Posterior cingulate gyrus (tissue), 11 donors: ENCODE measurements at regions of chr2 and their contacts with region 1.

Region 1: DNA sequence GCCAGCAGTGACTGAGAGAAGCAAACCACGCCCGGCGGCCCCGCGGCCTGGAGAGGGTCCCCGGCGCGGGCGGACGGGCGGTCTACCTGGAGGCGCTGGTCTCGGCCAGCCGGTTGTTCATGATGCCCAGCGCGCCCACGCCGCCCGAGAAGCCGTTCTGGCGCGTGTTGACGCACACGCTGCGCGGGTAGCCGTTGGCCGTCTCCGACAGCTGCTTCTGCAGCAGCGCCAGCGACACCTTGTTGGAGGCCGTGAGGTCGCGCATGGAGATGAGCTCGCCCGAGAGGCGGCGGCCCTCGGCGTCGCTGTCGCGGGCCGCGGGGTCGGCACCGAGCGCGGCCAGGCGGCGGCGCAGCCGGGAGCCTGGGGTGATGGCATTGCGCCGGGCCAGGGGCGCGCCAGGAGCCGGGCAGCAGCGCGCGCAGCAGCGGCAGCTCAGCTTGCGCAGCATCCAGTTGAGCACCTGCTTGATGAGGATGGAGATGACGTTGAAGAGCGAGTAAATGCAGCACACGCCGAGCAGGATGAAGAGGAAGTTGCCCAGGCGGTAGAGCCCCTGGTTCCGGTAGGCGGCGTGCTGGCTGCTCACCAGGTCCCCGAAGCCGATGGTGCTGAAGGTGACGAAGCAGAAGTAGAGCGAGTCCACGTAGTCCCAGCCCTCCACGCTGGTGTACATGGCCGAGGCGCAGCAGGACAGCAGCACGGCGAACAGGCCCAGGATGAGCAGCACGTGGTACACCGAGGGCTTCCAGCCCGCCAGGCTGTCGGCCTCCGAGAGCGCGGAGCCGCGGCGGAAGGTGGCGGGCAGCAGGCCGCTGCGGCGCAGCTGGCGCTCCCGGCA is 118.1 kb downstream of the MSH2 start:
- DNase-seq: peak; percentile 60 to 95 (median 72)

Region 2: DNA sequence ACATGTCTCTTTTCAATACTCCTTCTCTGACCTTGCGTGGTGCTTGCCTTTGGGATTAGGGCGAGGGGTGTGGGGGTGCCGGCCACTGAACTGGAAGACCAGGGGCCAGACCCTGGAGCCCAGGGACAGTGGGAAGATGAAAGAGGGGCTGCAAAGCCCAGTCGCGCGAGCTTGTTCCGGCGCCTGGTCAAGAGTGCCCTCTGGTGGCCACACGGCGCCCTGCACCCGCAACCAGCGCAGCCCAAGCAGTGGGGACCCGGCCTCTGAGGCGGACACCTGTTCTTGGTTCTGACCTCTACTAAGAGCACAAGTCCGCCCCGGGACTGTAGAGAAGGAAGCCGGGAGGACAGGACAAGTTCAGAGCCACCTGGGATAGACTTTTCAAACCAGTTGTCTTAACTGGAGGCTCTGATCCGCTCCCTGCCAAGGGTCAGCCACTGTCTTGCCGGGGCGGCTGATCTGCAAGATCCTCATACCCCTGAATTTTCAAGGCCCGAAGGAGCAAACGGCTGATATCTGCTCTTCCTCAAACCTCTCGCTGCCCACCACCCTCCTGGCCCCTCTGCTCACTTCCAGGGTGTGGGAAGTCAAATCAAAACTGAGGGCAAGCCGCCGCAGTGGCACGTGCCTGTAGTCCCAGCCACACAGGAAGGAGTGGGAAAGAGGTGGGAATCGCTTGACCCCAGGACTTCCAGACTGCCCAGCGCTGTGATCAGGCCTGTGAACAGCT is 247.0 kb after region 1 on chr2:
- intact Hi-C with region 1: loop called (anchors 5 kb)
- DNase-seq: peak; percentile 53 to 96 (median 80)